Cardiac septum (tissue), 1 donor: ENCODE measurements at regions of chr1 and their contacts with region 1.

Region 1: DNA sequence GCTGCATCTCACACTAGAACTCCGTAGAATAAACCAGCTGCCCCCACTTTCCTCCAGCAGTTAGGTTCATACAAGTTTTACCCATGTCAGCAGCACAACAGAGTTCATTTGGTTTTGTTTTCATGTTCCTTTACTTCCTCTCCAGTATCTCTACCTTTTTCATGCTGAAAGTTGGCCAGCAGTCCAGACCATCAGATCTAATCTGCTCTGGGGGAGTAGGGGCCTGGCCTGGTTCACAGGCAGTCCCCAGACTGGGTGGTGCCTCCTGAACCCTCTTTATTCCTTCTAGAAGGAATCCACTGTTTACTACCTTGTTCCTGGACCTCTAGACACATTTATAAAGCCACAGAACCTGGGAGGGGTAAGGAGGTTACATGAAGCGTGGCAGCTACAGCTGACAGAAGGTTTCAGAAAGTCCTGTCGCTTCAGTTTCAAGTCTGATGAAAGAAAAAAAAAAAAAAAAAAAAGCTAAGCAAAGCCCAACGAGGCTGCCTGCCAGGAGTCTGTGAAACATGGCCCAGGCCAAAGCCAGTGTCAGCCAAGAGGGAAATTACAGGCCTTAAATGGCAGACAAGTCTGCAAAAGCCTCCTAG is 184.6 kb upstream of the JUN start:
- DNase-seq: peak; percentile 82

Region 2: GRCh38 chr1:58883037-58883887 is 85.2 kb before region 1 on chr1:
- intact Hi-C with region 1: no loop called
- DNase-seq: peak; percentile 89

Region 3: DNA sequence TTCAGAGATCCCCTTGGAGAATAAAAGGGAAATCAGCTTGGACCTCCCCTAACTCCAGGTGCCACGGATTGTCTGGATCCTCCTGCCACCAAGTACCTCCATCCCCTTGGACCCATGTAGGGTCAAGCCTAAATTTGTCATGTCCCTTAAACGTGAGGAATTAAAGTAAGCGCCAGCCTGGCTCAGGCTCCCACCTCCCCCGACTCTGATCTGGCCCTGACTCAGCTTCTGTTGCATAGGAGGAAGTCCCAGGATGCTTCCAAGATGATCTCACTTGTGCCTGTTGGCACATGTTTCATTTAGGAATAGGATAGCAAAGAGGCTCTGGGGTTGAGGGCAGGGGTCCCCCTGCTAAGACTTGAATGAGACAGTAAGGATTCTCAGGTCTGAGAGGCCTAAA is 47.3 kb after region 1 on chr1:
- intact Hi-C with region 1: loop called (anchors 5 kb)
- DNase-seq: no peak